ENCODE measurements at regions of chr13 and their contacts with region 1.

Region 1: DNA sequence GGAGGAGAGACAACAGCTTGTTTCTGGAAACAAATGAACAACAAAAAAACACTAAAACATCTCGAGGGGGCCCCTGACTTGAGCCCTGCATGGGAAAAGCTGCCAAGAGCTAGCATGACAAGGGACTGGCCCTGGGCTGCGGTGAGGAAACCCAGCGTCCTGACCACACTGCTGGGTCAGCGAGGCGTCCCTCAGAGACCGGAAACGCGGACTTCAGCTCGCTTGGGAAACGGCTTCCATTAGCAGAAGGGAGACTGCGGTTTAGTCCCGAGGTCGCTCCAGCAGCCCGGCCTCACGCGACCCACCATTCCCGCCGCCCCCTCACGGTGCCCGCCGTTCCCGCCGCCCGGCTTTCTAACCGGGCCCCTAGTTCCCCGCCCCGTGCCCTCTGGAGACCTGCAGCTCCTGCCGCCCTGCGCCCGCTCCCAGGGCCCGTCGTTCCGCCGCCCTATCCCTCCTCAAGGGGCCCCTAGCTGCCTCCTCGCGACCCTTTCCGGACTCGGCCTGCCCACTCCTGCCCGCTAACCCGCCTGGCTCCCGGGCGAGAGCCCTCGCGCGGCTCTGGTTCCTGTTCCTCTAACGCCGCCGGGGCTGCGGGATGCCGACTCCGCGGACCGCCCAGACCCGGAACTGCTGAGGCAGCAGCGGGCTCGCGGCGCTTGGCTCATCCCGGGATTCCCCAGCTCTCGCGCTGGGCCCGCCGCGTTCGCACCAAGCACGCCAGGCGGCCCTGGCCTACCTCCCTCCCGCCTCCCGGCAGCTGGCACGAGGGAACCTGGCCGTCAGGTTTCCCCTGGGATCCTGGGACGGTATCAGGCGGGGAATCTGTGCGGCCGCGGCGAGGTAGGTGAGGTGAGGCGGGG is at the start of gene CCDC122:
- DNase-seq: peak; percentile 94 to 95
- ATAC-seq: peak; percentile 93
- H3K4me3 ChIP-seq: peak within 1 kb of the TSS; percentile 42 to 43
- H3K27ac ChIP-seq: peak within 1 kb of the TSS; percentile 34 to 61
- H3K4me1 ChIP-seq: peaks cover 0 to 5% of the 10 kb centered on the region in 2 donors
- H3K27me3 ChIP-seq: no peaks in the 10 kb centered on the region
- total RNA-seq, gene CCDC122: 6.4 to 8.6 TPM

Region 2: GRCh38 chr13:42594970-42595571 is 1284.1 kb before region 1 on chr13:
- intact Hi-C with region 1: loop called in 1 of 2 experiments (anchors 5 kb)
- DNase-seq: peak in 1 of 2 donors; percentile 46
- ATAC-seq: peak; percentile 73
- H3K4me3 ChIP-seq: no peak overlapping the region
- H3K27ac ChIP-seq: no peak overlapping the region
- H3K4me1 ChIP-seq: no peaks in the 10 kb centered on the region
- H3K27me3 ChIP-seq: no peaks in the 10 kb centered on the region

Region 3: GRCh38 chr13:42969558-42970172 is 909.5 kb before region 1 on chr13:
- intact Hi-C with region 1: loop called (anchors 5 kb)
- DNase-seq: peak; percentile 79 to 93
- ATAC-seq: peak; percentile 88
- H3K4me3 ChIP-seq: no peak overlapping the region
- H3K27ac ChIP-seq: no peak overlapping the region
- H3K4me1 ChIP-seq: no peaks in the 10 kb centered on the region
- H3K27me3 ChIP-seq: no peaks in the 10 kb centered on the region

Region 4: DNA sequence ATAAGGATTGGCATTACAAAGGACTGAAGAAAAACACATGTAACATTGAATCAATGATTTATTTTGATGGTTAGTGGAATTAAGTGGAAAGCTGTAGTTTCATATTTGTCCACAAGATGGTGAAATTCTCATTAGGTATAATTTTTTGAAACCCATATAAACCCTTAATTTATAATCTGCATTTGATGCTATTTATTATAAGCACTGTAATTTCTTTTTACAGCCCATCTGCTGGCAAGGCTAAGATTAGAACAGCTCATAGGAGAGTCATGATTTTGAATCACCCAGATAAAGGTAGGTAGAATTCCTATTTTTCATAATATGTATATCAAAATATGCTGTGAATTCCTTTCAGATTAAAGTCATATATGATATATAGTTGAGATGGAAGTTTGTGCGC is 793.6 kb before region 1 on chr13:
- intact Hi-C with region 1: loop called (anchors 5 to 10 kb)
- DNase-seq: no peak
- ATAC-seq: no peak
- H3K4me3 ChIP-seq: no peak overlapping the region
- H3K27ac ChIP-seq: no peak overlapping the region
- H3K4me1 ChIP-seq: no peaks in the 10 kb centered on the region
- H3K27me3 ChIP-seq: no peaks in the 10 kb centered on the region

Region 5: DNA sequence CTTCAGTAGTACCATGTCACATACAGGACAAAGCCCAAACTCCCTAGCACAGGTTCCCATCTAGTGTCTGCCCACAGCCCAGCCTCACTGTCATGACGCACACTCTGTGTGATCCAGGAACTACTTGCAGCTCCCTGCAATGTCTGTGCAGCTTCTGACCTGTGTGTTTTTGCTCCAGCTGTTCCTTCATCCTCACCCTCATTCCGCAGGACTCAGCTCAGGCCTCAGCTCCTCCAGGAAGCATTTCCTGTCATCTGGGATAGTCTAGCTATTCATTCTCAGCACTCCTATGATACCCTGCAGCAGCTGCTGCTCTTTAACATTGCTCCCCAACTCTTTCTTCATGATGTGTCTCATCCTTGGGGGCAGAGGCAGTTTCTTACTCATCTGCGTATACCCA is 148.5 kb before region 1 on chr13:
- intact Hi-C with region 1: no loop called
- DNase-seq: no peak
- ATAC-seq: no peak
- H3K4me3 ChIP-seq: no peak overlapping the region
- H3K27ac ChIP-seq: no peak overlapping the region
- H3K4me1 ChIP-seq: peaks cover 0 to 1% of the 10 kb centered on the region in 2 donors
- H3K27me3 ChIP-seq: no peaks in the 10 kb centered on the region